K562 (cell line): ENCODE measurements at regions of chr6 and their contacts with region 1.

Region 1: DNA sequence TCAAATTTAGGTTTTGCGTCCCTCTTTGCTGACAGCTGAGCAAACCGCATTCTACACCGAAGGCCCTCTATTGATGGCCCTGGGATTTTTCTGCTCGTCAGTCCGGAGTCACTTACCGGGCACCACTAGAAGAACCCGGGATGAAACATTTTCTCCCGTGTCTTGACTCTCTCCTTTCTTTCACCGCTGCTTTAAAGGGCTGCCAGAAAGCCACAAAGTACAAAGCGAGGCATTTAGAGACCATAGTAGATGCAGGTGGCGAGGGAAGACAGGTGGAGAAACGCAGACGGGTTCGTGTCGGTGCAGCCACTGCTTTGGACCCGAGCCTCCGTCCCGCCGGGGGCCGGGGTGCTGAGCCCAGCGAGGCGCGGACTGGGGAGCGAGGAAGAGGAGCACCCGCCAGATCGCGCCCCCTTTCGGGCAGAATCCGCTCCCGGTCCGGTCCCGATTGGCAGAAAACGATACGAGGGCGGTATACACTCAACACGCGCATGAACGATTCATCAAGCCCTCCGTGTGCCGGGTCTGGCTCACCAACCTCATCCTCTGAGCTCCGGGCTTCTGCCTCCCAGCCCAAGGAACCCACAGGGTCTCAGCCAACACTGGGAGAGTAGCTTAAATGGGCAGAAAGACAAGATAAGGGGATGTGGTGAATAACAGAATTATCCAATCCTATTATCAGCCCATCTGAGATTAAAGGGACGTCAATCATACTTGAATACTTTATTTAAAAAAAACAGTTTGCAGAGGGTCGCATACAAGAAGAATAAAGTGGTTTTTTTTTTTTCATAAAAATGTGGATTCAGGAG is 84.9 kb downstream of the TRIM27 start:
- DNase-seq: peak; percentile 90 to 96 (median 92)
- ATAC-seq: peak; percentile 94
- H3K4me3 ChIP-seq: peak overlapping the region; percentile 74
- H3K27ac ChIP-seq: peak overlapping the region; percentile 86
- H3K4me1 ChIP-seq: peaks cover 0 to 8% of the 10 kb centered on the region in 2 experiments; a peak in 2 of 5 replicates
- H3K27me3 ChIP-seq: no peaks in the 10 kb centered on the region
- CTCF ChIP-seq: peak; percentile 84 to 93 (median 88)
- EP300 ChIP-seq: no peak; the same call in 1 of the 2 replicates
- POLR2A ChIP-seq: peak; percentile 80
- RAD21 ChIP-seq: peak; percentile 69 to 73

Region 2: GRCh38 chr6:28807682-28808280 is 31.1 kb before region 1 on chr6:
- CTCF ChIA-PET with region 1: no interaction called
- POLR2A ChIA-PET with region 1: interaction called, 5 read pairs
- in situ Hi-C with region 1: no loop called
- intact Hi-C with region 1: loop called (anchors 2 kb)
- DNase-seq: peak; percentile 63 to 95 (median 70)
- ATAC-seq: peak; percentile 49
- H3K4me3 ChIP-seq: peak overlapping the region; percentile 52
- H3K27ac ChIP-seq: peak overlapping the region; percentile 25
- H3K4me1 ChIP-seq: peaks cover 11 to 12% of the 10 kb centered on the region in 2 experiments; a peak in 4 of 5 replicates
- H3K27me3 ChIP-seq: no peaks in the 10 kb centered on the region
- CTCF ChIP-seq: no peak
- EP300 ChIP-seq: peak; percentile 79
- POLR2A ChIP-seq: no peak
- RAD21 ChIP-seq: no peak; a peak in 1 of 4 replicates

Region 3: GRCh38 chr6:28863604-28864320 is 24.9 kb after region 1 on chr6:
- CTCF ChIA-PET with region 1: interaction called, 8 read pairs
- POLR2A ChIA-PET with region 1: interaction called, 5 read pairs
- in situ Hi-C with region 1: no loop called
- intact Hi-C with region 1: loop called (anchors 1 kb)
- DNase-seq: peak; percentile 64 to 92 (median 68)
- ATAC-seq: peak; percentile 72
- H3K4me3 ChIP-seq: peak overlapping the region; percentile 64
- H3K27ac ChIP-seq: peak overlapping the region; percentile 79
- H3K4me1 ChIP-seq: peaks cover 14 to 25% of the 10 kb centered on the region in 2 experiments; a peak in 4 of 5 replicates
- H3K27me3 ChIP-seq: no peaks in the 10 kb centered on the region
- CTCF ChIP-seq: 0 out of 6 replicates have a peak, but pooled peaks of 1 of the 3 experiments have one; percentile 61
- EP300 ChIP-seq: peak; percentile 76
- POLR2A ChIP-seq: peak; percentile 54; the same call in 1 of the 2 replicates
- RAD21 ChIP-seq: peak in 1 of 2 experiments; percentile 63; a peak in 3 of 4 replicates

Region 4: DNA sequence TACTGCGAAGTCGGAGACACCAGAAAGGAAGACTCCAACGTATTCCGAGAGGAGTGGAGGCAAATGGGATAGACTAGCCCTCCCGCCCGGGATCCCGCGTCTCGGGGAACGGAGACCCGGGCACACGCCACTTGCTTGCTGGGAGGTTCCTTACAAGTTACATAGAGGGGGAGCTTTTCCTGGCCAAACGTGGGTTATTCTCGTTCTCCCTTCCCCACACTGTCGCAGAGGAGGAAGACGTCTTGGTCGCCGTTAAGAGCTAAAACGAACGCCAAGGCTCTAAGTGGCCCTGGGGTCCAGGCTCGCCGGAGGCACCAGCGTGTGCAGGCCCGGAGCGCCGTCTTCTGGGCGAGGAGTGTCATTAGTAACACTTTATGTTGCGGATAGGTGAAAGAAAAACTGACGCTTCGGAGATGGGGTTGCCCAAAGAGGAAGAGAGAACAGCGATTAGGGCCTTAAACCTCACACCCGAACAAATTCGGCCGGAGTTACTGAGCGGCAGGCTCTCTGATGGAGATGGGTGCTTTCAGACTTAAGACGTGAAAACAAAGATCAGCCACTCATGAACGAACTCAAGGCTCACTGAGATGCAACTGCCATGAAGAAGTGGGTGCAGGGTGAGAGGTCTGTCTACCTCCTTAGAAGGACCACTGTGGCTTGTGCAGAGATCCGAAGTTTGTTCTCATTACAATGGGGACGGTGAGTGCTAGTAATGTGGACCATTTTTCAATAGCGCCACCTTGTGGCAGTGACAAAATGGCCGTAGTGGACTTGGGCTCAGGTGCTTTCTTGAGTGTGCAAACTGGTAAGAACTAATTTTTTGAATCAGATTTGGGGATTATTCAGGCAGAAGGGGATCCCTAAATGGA is 178.0 kb after region 1 on chr6:
- CTCF ChIA-PET with region 1: interaction called, 53 read pairs
- POLR2A ChIA-PET with region 1: interaction called, 4 read pairs
- in situ Hi-C with region 1: loop called (anchors 5 kb)
- intact Hi-C with region 1: loop called (anchors 1 kb)
- DNase-seq: peak; percentile 73 to 96 (median 78)
- ATAC-seq: peak; percentile 96
- H3K4me3 ChIP-seq: peak overlapping the region; percentile 56
- H3K27ac ChIP-seq: peak overlapping the region; percentile 69
- H3K4me1 ChIP-seq: peaks cover 3 to 7% of the 10 kb centered on the region in 2 experiments; a peak in 3 of 5 replicates
- H3K27me3 ChIP-seq: no peaks in the 10 kb centered on the region
- CTCF ChIP-seq: peak; percentile 90 to 93 (median 93)
- EP300 ChIP-seq: no peak
- POLR2A ChIP-seq: no peak
- RAD21 ChIP-seq: peak; percentile 88 to 93

Region 5: GRCh38 chr6:29589423-29590048 is 750.7 kb after region 1 on chr6:
- CTCF ChIA-PET with region 1: interaction called, 3 read pairs
- POLR2A ChIA-PET with region 1: no interaction called
- in situ Hi-C with region 1: loop called (anchors 25 kb)
- intact Hi-C with region 1: loop called (anchors 5 kb)
- DNase-seq: peak; percentile 64 to 74 (median 74)
- ATAC-seq: peak; percentile 89
- H3K4me3 ChIP-seq: no peak overlapping the region
- H3K27ac ChIP-seq: no peak overlapping the region
- H3K4me1 ChIP-seq: no peaks in the 10 kb centered on the region
- H3K27me3 ChIP-seq: peaks cover 3 to 10% of the 10 kb centered on the region in 2 experiments; a peak in 2 of 5 replicates
- CTCF ChIP-seq: peak; percentile 87 to 98 (median 97)
- EP300 ChIP-seq: no peak
- POLR2A ChIP-seq: no peak
- RAD21 ChIP-seq: peak; percentile 97 to 98